ENCODE measurements at regions of chr5 and their contacts with region 1.

Region 1: GRCh38 chr5:64634997-64635686 is 55.2 kb upstream of the SHISAL2B start:
- DNase-seq: no peak
- H3K4me3 ChIP-seq: no peak overlapping the region
- H3K27ac ChIP-seq: no peak overlapping the region
- H3K4me1 ChIP-seq: no peaks in the 10 kb centered on the region
- H3K27me3 ChIP-seq: peaks cover 24% of the 10 kb centered on the region
- CTCF ChIP-seq: peak; percentile 83

Region 2: DNA sequence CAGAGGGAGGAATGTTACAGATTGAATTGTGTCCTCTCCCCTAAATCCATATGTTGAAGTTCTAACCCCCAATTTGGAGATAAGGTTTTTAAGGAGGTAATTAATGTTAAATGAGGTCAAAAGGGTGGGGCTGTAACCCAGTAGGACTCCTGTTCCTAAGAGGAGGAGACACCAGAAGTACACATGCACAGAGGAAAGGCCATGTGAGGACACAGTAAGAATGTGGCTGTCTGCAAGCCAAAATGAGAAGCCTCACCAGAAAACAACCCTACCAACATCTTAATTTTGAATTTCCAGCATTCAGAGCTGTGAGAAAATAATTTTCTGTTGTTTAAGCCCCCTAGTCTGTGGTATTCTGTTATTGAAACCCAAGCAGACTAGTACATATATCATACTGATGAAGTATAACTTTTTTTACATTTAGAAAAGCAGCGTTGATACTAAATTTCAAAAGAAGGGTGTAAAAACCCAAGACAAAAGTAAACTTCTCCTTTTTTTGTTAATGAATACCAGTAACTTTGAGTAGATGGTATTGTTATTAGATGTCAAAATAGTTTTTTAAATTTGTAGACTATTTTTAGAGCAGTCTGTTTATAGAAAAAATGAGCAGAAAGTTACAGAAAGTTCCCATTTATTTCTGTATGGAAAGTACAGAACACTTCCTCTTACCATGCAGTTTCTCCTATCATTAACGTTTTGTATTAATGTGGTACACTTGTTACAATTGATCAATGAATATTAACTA is 444.4 kb before region 1 on chr5:
- intact Hi-C with region 1: no loop called
- DNase-seq: no peak
- H3K4me3 ChIP-seq: no peak overlapping the region
- H3K27ac ChIP-seq: no peak overlapping the region
- H3K4me1 ChIP-seq: peaks cover 34% of the 10 kb centered on the region
- H3K27me3 ChIP-seq: no peaks in the 10 kb centered on the region
- CTCF ChIP-seq: no peak

Region 3: DNA sequence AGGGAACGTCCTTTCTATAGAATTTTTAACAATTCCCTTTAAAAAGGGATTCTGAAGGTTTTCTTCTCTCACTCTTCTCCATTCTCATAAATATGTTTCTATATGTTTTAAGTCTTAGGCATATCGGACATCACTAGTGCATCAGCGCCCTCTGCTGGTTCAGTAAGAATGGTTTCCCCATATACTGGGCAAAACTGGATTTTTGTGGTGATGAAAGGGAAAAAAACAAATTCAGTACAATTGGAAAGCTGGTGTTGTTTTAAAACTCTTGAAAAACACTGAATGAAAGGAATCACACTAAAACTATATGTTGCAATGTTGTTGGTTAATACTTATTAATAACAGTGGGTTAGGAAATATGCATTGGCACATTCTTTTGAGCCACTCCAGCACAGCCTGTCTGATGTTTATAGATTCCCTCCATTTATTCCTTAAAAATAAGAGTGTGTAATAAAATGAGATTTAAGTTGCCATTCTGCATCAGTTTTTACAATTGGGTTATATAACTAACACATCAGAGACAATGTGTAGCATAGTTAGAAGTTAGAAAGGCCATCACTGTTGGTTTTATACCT is 149.4 kb after region 1 on chr5:
- intact Hi-C with region 1: loop called (anchors 2 kb)
- DNase-seq: peak; percentile 31
- H3K4me3 ChIP-seq: no peak overlapping the region
- H3K27ac ChIP-seq: no peak overlapping the region
- H3K4me1 ChIP-seq: no peaks in the 10 kb centered on the region
- H3K27me3 ChIP-seq: no peaks in the 10 kb centered on the region
- CTCF ChIP-seq: peak; percentile 89